ENCODE measurements at regions of chr9 and their contacts with region 1.

Region 1: GRCh38 chr9:5450359-5451091 is at the start of gene CD274:
- DNase-seq: no peak
- H3K4me3 ChIP-seq: peak within 1 kb of the TSS; percentile 72
- CTCF ChIP-seq: peak; percentile 70

Region 2: DNA sequence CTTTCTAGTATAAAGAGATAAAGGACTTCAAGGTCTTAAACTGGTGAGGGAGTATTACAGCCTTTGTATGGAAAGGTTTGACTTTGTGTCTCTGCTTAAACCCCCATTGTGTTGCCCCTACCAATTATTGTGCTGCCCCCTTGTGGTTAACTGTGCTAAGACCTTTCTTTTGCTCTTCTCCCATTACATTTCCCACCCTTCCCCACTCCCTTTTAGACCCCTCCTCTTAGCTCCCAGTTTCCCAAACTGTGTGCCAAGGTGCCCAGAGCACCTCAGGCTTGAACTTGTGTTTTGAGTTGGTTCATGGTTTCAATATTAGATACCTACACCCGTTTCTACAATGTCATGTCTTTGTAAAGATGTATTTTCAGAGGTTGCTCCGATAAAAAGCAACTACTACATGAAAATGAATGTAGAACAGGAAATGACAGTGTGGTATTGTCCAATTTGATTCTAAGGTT is 462.5 kb before region 1 on chr9:
- CTCF ChIA-PET with region 1: no interaction called
- POLR2A ChIA-PET with region 1: no interaction called
- DNase-seq: no peak
- H3K4me3 ChIP-seq: no peak overlapping the region
- CTCF ChIP-seq: peak; percentile 60

Region 3: DNA sequence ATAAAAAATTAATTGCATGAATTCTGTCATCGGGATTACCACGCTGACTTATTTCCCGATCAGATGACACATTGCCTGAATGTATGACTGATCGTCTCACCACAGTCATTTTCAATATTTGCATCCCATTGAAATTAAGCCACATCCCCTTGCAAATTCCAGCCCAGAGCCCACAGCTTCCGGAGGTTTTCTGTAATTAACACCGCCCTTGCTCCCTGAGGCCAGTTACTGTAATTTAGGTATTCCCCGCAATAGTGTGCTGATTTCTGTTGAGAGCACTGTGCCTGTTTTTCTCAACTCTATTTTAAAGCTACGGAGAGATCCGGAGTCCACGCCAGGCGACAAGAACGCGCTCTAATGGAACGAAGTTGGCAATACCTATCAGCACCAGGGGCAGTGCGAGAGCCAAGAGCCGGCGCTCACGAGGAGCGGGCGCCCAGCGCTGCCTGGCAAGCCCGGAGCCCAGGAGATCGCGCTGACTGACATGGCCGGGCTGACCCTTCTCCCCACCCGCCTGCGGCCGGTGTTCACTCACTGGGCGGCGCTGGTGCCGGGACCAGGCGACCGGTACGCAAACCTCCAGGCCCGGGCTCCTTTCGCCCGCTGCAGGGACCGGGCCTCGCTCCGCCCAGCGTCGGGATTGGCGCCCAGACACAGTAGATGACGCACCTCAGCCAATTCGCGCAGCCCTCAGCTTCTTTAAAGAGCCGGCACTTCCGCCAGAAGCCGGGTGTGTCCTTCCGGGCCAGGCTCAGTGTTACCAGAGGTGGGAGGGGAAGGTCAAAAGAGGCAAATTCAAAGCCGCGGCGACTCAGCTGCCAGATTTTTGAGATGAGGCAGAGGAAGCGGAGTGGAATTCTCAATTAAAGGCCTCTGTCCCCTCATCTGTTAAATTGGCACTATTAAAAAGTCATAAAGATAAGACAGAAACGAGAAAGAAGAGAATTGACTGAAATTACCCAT is 13.0 kb before region 1 on chr9 and contains the start of gene PLGRKT:
- CTCF ChIA-PET with region 1: interaction called, 20 read pairs
- POLR2A ChIA-PET with region 1: interaction called, 7 read pairs
- DNase-seq: no peak
- H3K4me3 ChIP-seq: peak within 1 kb of the TSS; percentile 78
- CTCF ChIP-seq: no peak

Region 4: GRCh38 chr9:5510360-5510931 is 59.9 kb after region 1 on chr9 and contains the start of gene PDCD1LG2:
- CTCF ChIA-PET with region 1: interaction called, 5 read pairs
- POLR2A ChIA-PET with region 1: interaction called, 11 read pairs
- DNase-seq: peak; percentile 60
- H3K4me3 ChIP-seq: peak within 1 kb of the TSS; percentile 64
- CTCF ChIP-seq: no peak

Region 5: GRCh38 chr9:5593904-5594303 is 143.4 kb after region 1 on chr9:
- CTCF ChIA-PET with region 1: interaction called, 75 read pairs
- POLR2A ChIA-PET with region 1: no interaction called
- DNase-seq: no peak
- H3K4me3 ChIP-seq: no peak overlapping the region
- CTCF ChIP-seq: no peak

Measured in AG04449 (cell line).